ENCODE measurements at regions of chr5 and their contacts with region 1.

Region 1: GRCh38 chr5:95870105-95870672 is 47.7 kb upstream of the GLRX start:
- DNase-seq: peak; percentile 20
- H3K4me3 Mint-ChIP-seq: peak overlapping the region; percentile 64
- H3K27ac Mint-ChIP-seq: peak overlapping the region; percentile 97
- H3K4me1 Mint-ChIP-seq: peaks cover 55% of the 10 kb centered on the region
- H3K27me3 Mint-ChIP-seq: no peaks in the 10 kb centered on the region

Region 2: GRCh38 chr5:95565280-95565920 is 304.8 kb before region 1 on chr5:
- intact Hi-C with region 1: no loop called
- DNase-seq: no peak
- H3K4me3 Mint-ChIP-seq: no peak overlapping the region
- H3K27ac Mint-ChIP-seq: no peak overlapping the region
- H3K4me1 Mint-ChIP-seq: no peaks in the 10 kb centered on the region
- H3K27me3 Mint-ChIP-seq: peaks cover 2% of the 10 kb centered on the region

Region 3: GRCh38 chr5:95591490-95591901 is 278.7 kb before region 1 on chr5:
- intact Hi-C with region 1: loop called (anchors 1 kb)
- DNase-seq: no peak
- H3K4me3 Mint-ChIP-seq: no peak overlapping the region
- H3K27ac Mint-ChIP-seq: peak overlapping the region; percentile 24
- H3K4me1 Mint-ChIP-seq: peaks cover 23% of the 10 kb centered on the region
- H3K27me3 Mint-ChIP-seq: peaks cover 2% of the 10 kb centered on the region

Region 4: GRCh38 chr5:95835682-95836385 is 34.4 kb before region 1 on chr5:
- intact Hi-C with region 1: loop called (anchors 1 kb)
- DNase-seq: no peak
- H3K4me3 Mint-ChIP-seq: peak overlapping the region; percentile 76
- H3K27ac Mint-ChIP-seq: peak overlapping the region; percentile 54
- H3K4me1 Mint-ChIP-seq: peaks cover 37% of the 10 kb centered on the region
- H3K27me3 Mint-ChIP-seq: peaks cover 2% of the 10 kb centered on the region

Region 5: DNA sequence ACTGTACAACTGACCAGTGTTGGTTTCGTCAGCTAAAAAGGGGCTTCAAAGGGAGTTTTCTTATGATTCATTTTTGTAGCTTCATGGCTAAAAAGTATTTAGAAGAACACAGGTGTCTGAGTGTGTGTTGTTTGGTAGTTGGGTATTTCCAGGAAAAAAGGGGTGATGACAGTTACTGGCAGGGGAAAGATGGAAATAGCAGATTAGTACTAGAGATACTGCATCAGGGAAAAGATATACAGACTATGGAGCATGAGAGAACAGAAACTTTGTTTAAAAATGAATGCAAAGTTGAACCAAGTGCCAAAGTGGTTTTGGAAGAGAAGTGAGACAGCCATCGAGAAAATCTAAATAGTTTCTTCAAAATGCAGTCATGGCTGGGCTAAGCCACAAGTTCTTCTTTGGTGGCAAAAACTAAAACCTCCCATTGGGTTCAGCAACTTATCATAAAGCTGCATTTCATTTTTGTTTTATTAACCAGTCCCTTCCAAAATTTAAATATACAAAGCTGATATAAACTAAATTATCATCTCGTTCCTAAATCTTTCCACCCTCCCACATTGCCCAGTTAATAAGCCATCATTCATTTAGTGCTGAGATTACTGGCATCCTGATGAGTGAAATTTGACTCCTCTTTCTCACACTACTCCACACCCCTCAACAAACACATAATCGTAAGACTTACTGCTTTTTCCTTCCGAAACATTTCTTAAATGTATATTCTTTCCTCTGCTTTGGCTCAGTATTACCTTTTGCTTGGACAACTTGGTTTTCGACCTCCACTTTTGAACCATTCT is 57.9 kb after region 1 on chr5:
- intact Hi-C with region 1: loop called (anchors 1 kb)
- DNase-seq: no peak
- H3K4me3 Mint-ChIP-seq: peak overlapping the region; percentile 67
- H3K27ac Mint-ChIP-seq: peak overlapping the region; percentile 89
- H3K4me1 Mint-ChIP-seq: peaks cover 79% of the 10 kb centered on the region
- H3K27me3 Mint-ChIP-seq: no peaks in the 10 kb centered on the region

Region 6: GRCh38 chr5:96220610-96221390 is 350.6 kb after region 1 on chr5:
- intact Hi-C with region 1: loop called (anchors 1 kb)
- DNase-seq: no peak
- H3K4me3 Mint-ChIP-seq: no peak overlapping the region
- H3K27ac Mint-ChIP-seq: peak overlapping the region; percentile 81
- H3K4me1 Mint-ChIP-seq: peaks cover 13% of the 10 kb centered on the region
- H3K27me3 Mint-ChIP-seq: peaks cover 1% of the 10 kb centered on the region

Region 7: GRCh38 chr5:96536991-96537785 is 667.0 kb after region 1 on chr5:
- intact Hi-C with region 1: loop called (anchors 1 kb)
- DNase-seq: peak; percentile 32
- H3K4me3 Mint-ChIP-seq: no peak overlapping the region
- H3K27ac Mint-ChIP-seq: peak overlapping the region; percentile 78
- H3K4me1 Mint-ChIP-seq: peaks cover 26% of the 10 kb centered on the region
- H3K27me3 Mint-ChIP-seq: peaks cover 3% of the 10 kb centered on the region

Measured in activated T-helper 1 cell treated with anti-CD3 and anti-CD28 coated beads, Interleukin-12 subunit alpha, Interleukin-12 subunit beta, Interleukin-2, Interleukin-4 antibody, amounts not matched to agents 30 ng/mL and 10 ng/mL and 1 ng/mL, durations not matched to agents 14 hours and 24 hours and 36 hours (primary cell).